ENCODE measurements at regions of chr5 and their contacts with region 1.

Region 1: GRCh38 chr5:84274585-84275468 is 109.9 kb downstream of the EDIL3 start:
- DNase-seq: no peak
- H3K4me3 ChIP-seq: no peak overlapping the region
- H3K27ac ChIP-seq: no peak overlapping the region
- H3K4me1 ChIP-seq: no peaks in the 10 kb centered on the region
- H3K27me3 ChIP-seq: no peaks in the 10 kb centered on the region
- CTCF ChIP-seq: peak in 5 of 6 experiments; percentile 45 to 69 (median 53)
- POLR2A ChIP-seq: no peak

Region 2: GRCh38 chr5:84430857-84431663 is 156.2 kb after region 1 on chr5:
- intact Hi-C with region 1: no loop called
- DNase-seq: no peak
- H3K4me3 ChIP-seq: no peak overlapping the region
- H3K27ac ChIP-seq: peak overlapping the region in 1 of 4 donors; percentile 12
- H3K4me1 ChIP-seq: peaks cover 0 to 27% (median 19%) of the 10 kb centered on the region in 3 donors
- H3K27me3 ChIP-seq: no peaks in the 10 kb centered on the region
- CTCF ChIP-seq: no peak
- POLR2A ChIP-seq: no peak

Region 3: DNA sequence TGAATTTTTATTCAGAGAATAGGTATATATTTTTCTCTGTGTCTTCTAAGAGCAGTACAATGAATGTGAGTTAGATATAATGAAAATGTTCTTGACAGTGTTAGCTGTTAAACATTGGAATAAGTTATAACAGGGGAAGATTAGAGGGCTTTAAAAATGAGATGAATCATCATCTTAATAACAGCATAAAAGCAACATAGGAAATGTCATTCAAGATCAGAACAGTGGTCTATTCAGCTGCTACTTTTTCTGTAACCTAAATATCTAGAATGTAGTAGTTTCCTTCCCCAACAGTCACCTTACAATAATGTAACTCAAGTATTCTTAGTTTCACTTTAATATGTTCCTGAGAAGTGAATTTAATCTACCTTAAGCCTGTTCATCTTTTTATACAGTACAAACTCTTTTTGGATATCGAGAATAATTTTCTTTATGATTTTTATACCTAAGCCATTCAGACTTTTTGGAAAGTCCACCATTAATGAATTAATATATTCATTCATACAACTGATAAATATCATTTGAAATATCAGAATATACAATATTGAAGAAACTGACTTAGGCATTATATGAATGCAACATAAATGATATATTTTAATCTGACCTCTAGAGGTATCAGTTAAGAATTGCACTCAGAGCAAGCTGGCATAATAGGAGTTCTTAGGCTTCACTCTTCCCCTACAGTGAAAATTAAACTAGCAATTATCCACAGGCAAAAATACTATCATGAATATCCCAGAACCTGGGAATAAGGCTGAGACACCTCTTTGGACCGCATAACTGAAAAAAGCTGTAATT is 176.0 kb after region 1 on chr5:
- intact Hi-C with region 1: loop called (anchors 5 kb)
- DNase-seq: no peak
- H3K4me3 ChIP-seq: no peak overlapping the region
- H3K27ac ChIP-seq: no peak overlapping the region
- H3K4me1 ChIP-seq: peaks cover 0 to 9% (median 0%) of the 10 kb centered on the region in 3 donors
- H3K27me3 ChIP-seq: no peaks in the 10 kb centered on the region
- CTCF ChIP-seq: peak in 4 of 6 experiments; percentile 26 to 59 (median 40)
- POLR2A ChIP-seq: no peak